Activated T-helper 1 cell treated with anti-CD3 and anti-CD28 coated beads, Interleukin-12 subunit alpha, Interleukin-12 subunit beta, Interleukin-2, Interleukin-4 antibody, amounts not matched to agents 30 ng/mL and 10 ng/mL and 1 ng/mL, durations not matched to agents 14 hours and 24 hours and 36 hours (primary cell): ENCODE measurements at regions of chr17 and their contacts with region 1.

Region 1: DNA sequence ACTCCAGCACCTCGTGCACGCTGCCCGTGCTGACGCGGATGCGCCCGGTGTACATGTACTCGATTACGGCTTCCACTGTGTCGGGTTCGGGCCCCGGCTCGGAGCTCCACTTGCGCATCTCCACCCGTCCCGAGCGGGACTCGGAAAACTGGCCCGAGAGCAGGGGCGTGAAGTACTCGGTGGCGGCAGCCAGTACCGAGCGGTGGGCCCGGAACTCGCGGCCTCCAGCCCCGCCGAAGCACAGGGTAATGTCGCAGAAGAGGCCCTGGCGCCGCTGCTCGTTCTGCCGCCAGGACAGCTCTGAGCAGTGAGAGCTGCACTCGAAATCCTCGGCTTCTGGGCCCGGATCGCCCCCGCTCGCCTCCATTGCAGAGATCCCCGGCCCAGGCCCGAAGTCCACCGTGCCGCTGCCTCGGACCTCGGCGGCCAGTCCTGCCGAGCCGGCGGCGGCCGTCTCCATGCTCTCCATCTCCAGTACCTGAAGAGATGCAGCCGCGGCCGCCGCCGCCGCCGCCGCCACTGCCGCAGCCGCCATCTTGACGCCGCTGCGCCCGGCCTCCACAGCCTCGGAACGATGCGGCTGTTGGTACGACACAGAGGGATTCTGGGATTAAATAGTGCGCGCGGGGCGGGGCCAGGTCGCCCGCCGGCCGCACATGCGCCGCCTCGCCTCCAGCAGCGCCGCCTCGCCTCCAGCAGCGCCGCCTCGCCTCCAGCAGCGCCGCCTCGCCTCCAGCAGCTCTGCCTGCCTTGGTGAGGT is at the start of gene KLHL11:
- DNase-seq: peak; percentile 88
- H3K4me3 Mint-ChIP-seq: no peak within 1 kb of the TSS
- H3K27ac Mint-ChIP-seq: peak within 1 kb of the TSS; percentile 83
- H3K4me1 Mint-ChIP-seq: peaks cover 32% of the 10 kb centered on the region
- H3K27me3 Mint-ChIP-seq: no peaks in the 10 kb centered on the region
- total RNA-seq, gene KLHL11: 20.0 and 21.7 TPM in 2 replicates

Region 2: GRCh38 chr17:41688699-41689496 is 176.1 kb before region 1 on chr17 and contains the start of gene EIF1:
- intact Hi-C with region 1: loop called (anchors 5 kb)
- DNase-seq: peak; percentile 100
- H3K4me3 Mint-ChIP-seq: peak within 1 kb of the TSS; percentile 96
- H3K27ac Mint-ChIP-seq: peak within 1 kb of the TSS; percentile 96
- H3K4me1 Mint-ChIP-seq: peaks cover 29% of the 10 kb centered on the region
- H3K27me3 Mint-ChIP-seq: peaks cover 3% of the 10 kb centered on the region
- total RNA-seq, gene EIF1: 876 and 893 TPM in 2 replicates

Region 3: GRCh38 chr17:41705271-41705991 is 159.6 kb before region 1 on chr17:
- intact Hi-C with region 1: no loop called
- DNase-seq: no peak
- H3K4me3 Mint-ChIP-seq: no peak overlapping the region
- H3K27ac Mint-ChIP-seq: no peak overlapping the region
- H3K4me1 Mint-ChIP-seq: peaks cover 1% of the 10 kb centered on the region
- H3K27me3 Mint-ChIP-seq: peaks cover 9% of the 10 kb centered on the region

Region 4: DNA sequence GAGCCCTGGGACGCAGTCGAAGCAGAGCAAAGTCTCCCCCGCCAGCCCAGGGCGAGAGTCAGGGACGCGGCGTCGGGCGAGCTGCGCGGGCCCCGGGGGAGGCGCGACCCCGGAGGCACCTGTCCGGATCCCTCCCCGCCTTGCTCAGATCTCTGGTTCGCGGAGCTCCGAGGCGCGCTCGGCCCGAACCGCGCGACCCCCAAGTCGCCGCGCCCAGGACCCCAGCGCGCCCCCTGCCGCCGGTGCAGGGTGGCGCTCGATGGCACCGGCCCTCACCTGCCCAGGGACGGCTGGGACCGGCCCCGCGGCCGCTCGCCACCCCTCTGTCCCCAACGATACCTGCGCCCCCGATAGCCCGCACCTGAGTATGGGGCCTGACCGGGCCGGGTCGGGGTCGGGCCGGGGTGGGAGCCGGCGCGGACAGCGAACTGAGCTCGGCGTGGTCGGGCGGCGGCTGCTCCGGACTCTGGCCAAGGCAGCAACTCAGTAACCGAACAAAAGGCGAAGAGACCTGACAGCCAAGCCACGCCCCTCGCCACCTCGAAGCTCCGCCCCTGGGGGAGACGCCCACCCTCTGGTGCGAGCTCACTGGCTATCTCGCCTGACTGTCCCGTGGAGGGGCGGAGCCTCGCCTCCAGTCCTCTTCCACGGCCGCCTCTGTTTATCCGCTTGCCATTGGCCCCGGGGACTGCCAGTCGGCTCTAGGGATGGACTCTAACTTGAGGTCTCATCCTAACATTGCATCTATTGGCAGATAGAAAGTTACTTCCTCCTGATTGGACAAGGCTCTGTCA is 78.6 kb before region 1 on chr17 and contains the start of gene JUP:
- intact Hi-C with region 1: loop called (anchors 2 kb)
- DNase-seq: peak; percentile 87
- H3K4me3 Mint-ChIP-seq: peak within 1 kb of the TSS; percentile 68
- H3K27ac Mint-ChIP-seq: no peak within 1 kb of the TSS
- H3K4me1 Mint-ChIP-seq: peaks cover 11% of the 10 kb centered on the region
- H3K27me3 Mint-ChIP-seq: peaks cover 52% of the 10 kb centered on the region
- total RNA-seq, gene JUP: 0.12 and 0.39 TPM in 2 replicates

Region 5: GRCh38 chr17:41835800-41836549 is 29.0 kb before region 1 on chr17 and contains the start of gene NT5C3B:
- intact Hi-C with region 1: loop called (anchors 1 kb)
- DNase-seq: peak; percentile 53
- H3K4me3 Mint-ChIP-seq: peak within 1 kb of the TSS; percentile 87
- H3K27ac Mint-ChIP-seq: peak within 1 kb of the TSS; percentile 65
- H3K4me1 Mint-ChIP-seq: peaks cover 11% of the 10 kb centered on the region
- H3K27me3 Mint-ChIP-seq: peaks cover 4% of the 10 kb centered on the region
- total RNA-seq, gene NT5C3B: 40.8 and 44.5 TPM in 2 replicates

Region 6: DNA sequence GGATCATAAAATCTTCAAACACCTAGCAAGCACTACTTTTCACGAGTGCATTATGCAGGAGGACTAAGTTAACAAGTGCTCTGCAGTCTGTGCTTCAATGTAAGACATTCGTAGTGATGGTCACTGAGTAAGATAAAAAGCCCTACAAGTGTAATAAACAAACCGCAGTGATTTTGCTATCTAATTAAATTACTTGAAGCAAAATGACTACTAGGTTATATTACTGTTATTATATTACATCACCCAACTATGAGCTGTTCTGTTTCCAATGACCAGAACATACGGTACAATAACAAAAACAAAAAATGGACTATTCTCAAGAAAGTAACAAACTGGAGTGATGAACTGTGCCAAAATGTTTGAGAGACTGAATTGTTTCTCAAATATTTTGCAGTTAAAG is 16.2 kb before region 1 on chr17:
- intact Hi-C with region 1: no loop called
- DNase-seq: no peak
- H3K4me3 Mint-ChIP-seq: no peak overlapping the region
- H3K27ac Mint-ChIP-seq: no peak overlapping the region
- H3K4me1 Mint-ChIP-seq: peaks cover 9% of the 10 kb centered on the region
- H3K27me3 Mint-ChIP-seq: no peaks in the 10 kb centered on the region

Region 7: DNA sequence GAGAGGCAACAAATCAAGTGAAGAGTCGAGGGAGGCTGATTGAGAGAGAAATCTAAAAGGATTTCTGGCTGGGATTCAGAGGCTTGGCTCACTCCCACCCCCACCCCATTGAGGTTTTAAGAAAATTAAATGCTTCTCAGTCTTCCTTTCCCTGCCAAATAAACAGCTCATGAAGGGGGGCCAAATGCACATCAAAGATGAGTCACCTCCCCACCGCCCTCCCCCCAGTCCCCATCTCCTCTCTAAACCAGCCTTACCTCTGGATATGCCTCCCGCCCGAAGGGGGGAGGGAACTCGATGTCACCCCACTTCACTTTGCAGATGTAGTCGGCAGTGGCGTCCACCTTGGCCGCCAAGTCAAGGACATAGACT is 42.2 kb after region 1 on chr17:
- intact Hi-C with region 1: no loop called
- DNase-seq: no peak
- H3K4me3 Mint-ChIP-seq: no peak overlapping the region
- H3K27ac Mint-ChIP-seq: no peak overlapping the region
- H3K4me1 Mint-ChIP-seq: no peaks in the 10 kb centered on the region
- H3K27me3 Mint-ChIP-seq: no peaks in the 10 kb centered on the region

Region 8: GRCh38 chr17:41930009-41930832 is 65.2 kb after region 1 on chr17 and contains the start of gene ODAD4:
- intact Hi-C with region 1: loop called (anchors 1 kb)
- DNase-seq: peak; percentile 95
- H3K4me3 Mint-ChIP-seq: peak within 1 kb of the TSS; percentile 97
- H3K27ac Mint-ChIP-seq: peak within 1 kb of the TSS; percentile 96
- H3K4me1 Mint-ChIP-seq: peaks cover 35% of the 10 kb centered on the region
- H3K27me3 Mint-ChIP-seq: no peaks in the 10 kb centered on the region
- total RNA-seq, gene ODAD4: 0.39 and 0.73 TPM in 2 replicates

Region 9: GRCh38 chr17:42153919-42154742 is 289.1 kb after region 1 on chr17:
- intact Hi-C with region 1: loop called (anchors 1 kb)
- DNase-seq: no peak
- H3K4me3 Mint-ChIP-seq: peak overlapping the region; percentile 89
- H3K27ac Mint-ChIP-seq: peak overlapping the region; percentile 75
- H3K4me1 Mint-ChIP-seq: peaks cover 25% of the 10 kb centered on the region
- H3K27me3 Mint-ChIP-seq: no peaks in the 10 kb centered on the region